Activated naive CD4-positive, alpha-beta T cell treated with anti-CD3 and anti-CD28 coated beads for 36 hours (primary cell): ENCODE measurements at regions of chr10 and their contacts with region 1.

Region 1: GRCh38 chr10:119103903-119104652 is at the start of gene DENND10:
- DNase-seq: peak; percentile 81
- H3K4me3 Mint-ChIP-seq: peak within 1 kb of the TSS; percentile 72
- H3K27ac Mint-ChIP-seq: no peak within 1 kb of the TSS
- H3K4me1 Mint-ChIP-seq: peaks cover 6% of the 10 kb centered on the region
- H3K27me3 Mint-ChIP-seq: no peaks in the 10 kb centered on the region
- total RNA-seq, gene DENND10: 16.9 to 17.6 TPM

Region 2: GRCh38 chr10:119028900-119029612 is 75.0 kb before region 1 on chr10:
- CTCF ChIA-PET with region 1: no interaction called
- intact Hi-C with region 1: loop called (anchors 2 kb)
- DNase-seq: peak; percentile 73
- H3K4me3 Mint-ChIP-seq: peak overlapping the region; percentile 66
- H3K27ac Mint-ChIP-seq: no peak overlapping the region
- H3K4me1 Mint-ChIP-seq: peaks cover 16% of the 10 kb centered on the region
- H3K27me3 Mint-ChIP-seq: peaks cover 4% of the 10 kb centered on the region

Region 3: DNA sequence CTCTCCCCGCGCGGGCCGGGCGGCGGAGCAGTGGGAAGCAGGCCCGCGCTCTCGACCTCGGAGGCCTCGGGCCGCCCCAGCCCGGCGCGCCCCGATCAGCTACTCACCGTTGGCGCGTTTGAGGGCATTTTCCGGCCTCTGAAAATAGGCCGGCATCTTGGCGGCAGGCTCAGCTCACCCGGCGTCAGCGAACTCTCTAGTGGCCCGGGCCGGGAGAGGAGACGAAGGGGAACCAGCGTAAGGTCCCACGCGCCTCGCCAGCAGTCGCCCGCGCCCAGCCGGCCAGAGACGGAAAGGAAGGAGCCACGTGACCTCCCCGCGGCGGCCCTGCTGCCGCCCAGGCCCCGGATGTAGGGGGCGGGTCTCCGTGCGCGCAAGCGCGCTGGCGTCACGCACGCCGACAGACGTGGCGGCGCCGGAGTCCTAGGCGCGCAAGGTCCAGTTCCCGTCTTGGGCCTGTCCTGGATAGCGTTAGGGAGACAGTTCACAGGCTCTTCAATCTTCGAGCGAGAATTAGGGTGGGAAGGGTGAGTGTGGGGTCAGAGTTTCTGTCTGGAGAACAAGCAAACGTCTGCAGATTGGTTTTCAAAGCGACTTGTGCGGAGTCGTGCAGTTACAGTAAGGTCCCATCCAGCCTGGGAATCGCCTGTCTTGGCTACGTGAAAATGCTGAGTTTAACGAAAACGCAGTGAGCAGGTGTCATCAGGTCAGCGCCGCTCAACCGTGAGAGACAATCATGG is 23.4 kb before region 1 on chr10 and contains the start of gene EIF3A:
- CTCF ChIA-PET with region 1: interaction called, 3 read pairs
- intact Hi-C with region 1: loop called (anchors 1 kb)
- DNase-seq: peak; percentile 90
- H3K4me3 Mint-ChIP-seq: peak within 1 kb of the TSS; percentile 95
- H3K27ac Mint-ChIP-seq: peak within 1 kb of the TSS; percentile 98
- H3K4me1 Mint-ChIP-seq: peaks cover 33% of the 10 kb centered on the region
- H3K27me3 Mint-ChIP-seq: no peaks in the 10 kb centered on the region
- total RNA-seq, gene EIF3A: 113 to 120 TPM

Region 4: DNA sequence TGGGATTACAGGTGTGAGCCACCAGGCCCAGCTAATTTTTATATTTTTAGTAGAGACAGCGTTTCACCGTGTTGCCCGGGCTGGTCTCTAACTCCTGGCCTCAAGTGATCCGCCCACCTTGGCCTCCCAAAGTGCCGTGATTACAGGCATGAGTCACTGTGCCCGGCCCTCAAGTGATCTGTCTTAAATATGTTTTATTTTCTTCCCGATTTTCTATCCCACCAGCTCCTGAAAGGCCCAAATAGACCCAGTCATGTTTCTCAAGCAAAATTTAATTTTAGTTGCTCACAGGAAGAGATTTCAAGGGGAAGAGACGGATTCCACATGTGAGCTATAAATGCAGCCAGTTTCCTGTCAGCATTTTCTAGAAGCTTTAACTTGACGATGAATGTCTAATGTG is 11.8 kb after region 1 on chr10:
- CTCF ChIA-PET with region 1: interaction called, 4 read pairs
- intact Hi-C with region 1: loop called (anchors 1 kb)
- DNase-seq: no peak
- H3K4me3 Mint-ChIP-seq: no peak overlapping the region
- H3K27ac Mint-ChIP-seq: no peak overlapping the region
- H3K4me1 Mint-ChIP-seq: peaks cover 3% of the 10 kb centered on the region
- H3K27me3 Mint-ChIP-seq: no peaks in the 10 kb centered on the region

Region 5: GRCh38 chr10:119165171-119166110 is 61.4 kb after region 1 on chr10 and contains the start of gene SFXN4:
- CTCF ChIA-PET with region 1: interaction called, 3 read pairs
- intact Hi-C with region 1: loop called (anchors 1 kb)
- DNase-seq: peak; percentile 75
- H3K4me3 Mint-ChIP-seq: peak within 1 kb of the TSS; percentile 83
- H3K27ac Mint-ChIP-seq: peak within 1 kb of the TSS; percentile 85
- H3K4me1 Mint-ChIP-seq: peaks cover 42% of the 10 kb centered on the region
- H3K27me3 Mint-ChIP-seq: no peaks in the 10 kb centered on the region
- total RNA-seq, gene SFXN4: 46.1 to 51.7 TPM